T-cell (primary cell): ENCODE measurements at regions of chr5 and their contacts with region 1.

Region 1: GRCh38 chr5:146785065-146785464 is 93.5 kb downstream of the PPP2R2B start:
- DNase-seq: no peak
- ATAC-seq: no peak
- H3K4me3 ChIP-seq: no peak overlapping the region
- H3K4me3 Mint-ChIP-seq: no peak overlapping the region
- H3K27ac ChIP-seq: no peak overlapping the region
- H3K27ac Mint-ChIP-seq: no peak overlapping the region
- H3K4me1 ChIP-seq: no peaks in the 10 kb centered on the region
- H3K4me1 Mint-ChIP-seq: peaks cover 3 to 8% (median 5%) of the 10 kb centered on the region in 3 donors
- H3K27me3 ChIP-seq: no peaks in the 10 kb centered on the region
- H3K27me3 Mint-ChIP-seq: no peaks in the 10 kb centered on the region

Region 2: DNA sequence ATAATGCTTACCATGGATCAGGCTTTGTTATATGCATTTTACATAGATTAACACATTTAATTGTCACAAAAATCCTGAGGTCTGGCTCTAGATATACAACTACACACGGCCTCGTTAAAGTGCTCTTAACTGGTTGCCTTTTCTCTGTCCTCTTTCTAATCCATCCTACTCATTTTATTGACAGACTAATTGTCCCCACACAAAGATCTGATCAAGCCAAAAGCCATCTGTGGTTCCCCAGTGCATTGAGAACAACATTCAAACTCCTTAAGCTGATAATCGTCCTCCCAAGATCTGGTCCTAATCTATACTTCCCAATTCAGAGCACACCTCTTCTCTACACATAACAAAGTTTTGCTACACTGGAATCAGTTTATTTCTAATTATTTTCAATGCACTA is 117.4 kb after region 1 on chr5:
- CTCF ChIA-PET with region 1: no interaction called
- POLR2A ChIA-PET with region 1: interaction called in 1 of 2 experiments, 29 read pairs
- DNase-seq: no peak
- ATAC-seq: no peak
- H3K4me3 ChIP-seq: no peak overlapping the region
- H3K4me3 Mint-ChIP-seq: no peak overlapping the region
- H3K27ac ChIP-seq: no peak overlapping the region
- H3K27ac Mint-ChIP-seq: no peak overlapping the region
- H3K4me1 ChIP-seq: no peaks in the 10 kb centered on the region
- H3K4me1 Mint-ChIP-seq: no peaks in the 10 kb centered on the region
- H3K27me3 ChIP-seq: no peaks in the 10 kb centered on the region
- H3K27me3 Mint-ChIP-seq: peaks cover 0 to 1% of the 10 kb centered on the region in 2 donors